Left lung (tissue), 14 donors: ENCODE measurements at regions of chr2 and their contacts with region 1.

Region 1: DNA sequence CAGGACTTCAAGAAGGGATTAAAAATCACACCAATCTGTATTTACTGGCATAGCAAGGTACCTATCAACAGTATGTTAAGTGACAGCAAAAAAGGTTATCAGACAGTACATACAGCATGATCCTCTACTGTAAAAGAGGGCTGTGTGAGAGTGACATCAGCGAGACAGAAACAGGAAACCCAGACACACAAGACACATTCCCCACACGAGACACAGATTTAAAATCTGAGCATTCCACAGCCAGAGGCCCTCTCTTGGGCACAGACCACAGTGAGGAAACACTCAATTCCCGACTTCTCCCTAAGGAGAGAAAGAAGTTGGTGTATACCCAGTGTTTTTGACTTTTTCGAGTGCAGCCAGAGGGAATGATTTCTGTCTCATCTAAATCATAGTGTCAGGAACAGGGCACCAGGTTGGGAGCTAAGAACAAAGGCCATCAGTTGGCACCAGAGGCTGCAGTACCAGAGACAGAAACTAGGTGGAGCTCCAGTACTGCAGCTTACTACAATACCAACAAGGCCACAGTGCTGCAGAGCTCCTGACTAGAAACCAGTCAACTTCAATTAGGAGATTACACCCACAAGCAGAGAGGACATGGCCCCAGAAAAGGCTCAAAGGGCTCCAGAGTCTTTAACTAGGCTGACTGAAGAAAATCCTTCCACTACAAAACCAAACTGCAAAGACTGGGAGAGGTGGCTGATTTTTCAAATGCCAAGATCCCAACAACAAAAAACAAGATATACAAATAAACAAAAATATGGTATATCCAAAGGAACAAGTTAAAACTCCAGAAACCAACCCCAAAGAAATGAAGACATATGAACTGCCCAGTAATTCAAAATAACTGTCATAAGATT is 41.0 kb downstream of the UNC50 start:
- DNase-seq: peak in 3 of 4 donors; percentile 65 to 81 (median 69)
- ATAC-seq: peak; percentile 100
- H3K4me3 ChIP-seq: no peak overlapping the region
- H3K27ac ChIP-seq: peak overlapping the region in 1 of 2 donors; percentile 0
- H3K4me1 ChIP-seq: peaks cover 0 to 4% of the 10 kb centered on the region in 2 donors
- H3K27me3 ChIP-seq: no peaks in the 10 kb centered on the region
- CTCF ChIP-seq: peak; percentile 97 to 98

Region 2: GRCh38 chr2:98524168-98524567 is 125.2 kb before region 1 on chr2:
- intact Hi-C with region 1: no loop called
- DNase-seq: no peak
- ATAC-seq: no peak
- H3K4me3 ChIP-seq: no peak overlapping the region
- H3K27ac ChIP-seq: no peak overlapping the region
- H3K4me1 ChIP-seq: no peaks in the 10 kb centered on the region
- H3K27me3 ChIP-seq: no peaks in the 10 kb centered on the region
- CTCF ChIP-seq: no peak

Region 3: DNA sequence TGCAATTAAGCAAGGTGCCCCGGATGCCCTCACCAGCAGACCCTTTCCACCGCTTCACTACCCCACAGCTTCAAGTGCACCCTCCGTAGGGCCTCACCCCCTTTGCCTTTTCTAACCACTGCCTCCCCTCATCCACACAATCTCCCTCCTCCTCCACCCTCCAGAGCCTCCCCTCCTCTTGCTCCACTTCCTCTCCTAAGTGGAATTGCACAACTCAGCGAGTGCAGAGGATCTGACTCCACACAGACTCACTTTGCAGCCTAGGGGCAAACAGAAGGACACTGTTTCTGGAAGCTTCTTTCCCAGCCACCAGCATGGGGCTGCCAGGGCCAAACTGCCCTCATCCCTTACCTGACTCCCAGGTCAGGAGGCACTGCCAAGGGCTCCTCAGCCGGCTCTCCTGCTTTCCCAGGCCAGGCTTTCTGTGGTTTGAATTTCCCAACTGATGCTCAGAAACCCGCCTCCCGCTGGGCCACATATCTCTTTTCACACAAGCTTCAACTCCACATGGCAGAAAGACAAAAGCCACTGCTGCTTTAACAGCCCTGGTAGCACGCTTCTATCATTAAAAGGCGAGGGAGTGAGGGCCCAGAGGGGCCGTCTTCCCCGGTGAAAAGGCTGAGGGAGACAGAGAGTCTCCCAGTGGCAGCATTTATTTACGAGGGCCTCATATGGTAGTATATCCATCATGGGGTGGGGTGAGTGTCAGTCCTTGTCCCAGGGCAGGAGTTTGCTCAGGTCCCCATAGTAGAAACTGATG is 156.2 kb after region 1 on chr2:
- intact Hi-C with region 1: no loop called
- DNase-seq: peak in 2 of 4 donors; percentile 79 to 83
- ATAC-seq: peak; percentile 82
- H3K4me3 ChIP-seq: no peak overlapping the region
- H3K27ac ChIP-seq: peak overlapping the region; percentile 77 to 82
- H3K4me1 ChIP-seq: peaks cover 20 to 54% of the 10 kb centered on the region in 2 donors
- H3K27me3 ChIP-seq: no peaks in the 10 kb centered on the region
- CTCF ChIP-seq: no peak

Region 4: GRCh38 chr2:98835831-98836385 is 186.5 kb after region 1 on chr2:
- intact Hi-C with region 1: loop called (anchors 2 to 10 kb)
- DNase-seq: no peak
- ATAC-seq: no peak
- H3K4me3 ChIP-seq: no peak overlapping the region
- H3K27ac ChIP-seq: peak overlapping the region in 1 of 2 donors; percentile 7
- H3K4me1 ChIP-seq: peaks cover 0 to 7% of the 10 kb centered on the region in 2 donors
- H3K27me3 ChIP-seq: no peaks in the 10 kb centered on the region
- CTCF ChIP-seq: no peak